CD8-positive, alpha-beta T cell (primary cell): ENCODE measurements at regions of chr2 and their contacts with region 1.

Region 1: DNA sequence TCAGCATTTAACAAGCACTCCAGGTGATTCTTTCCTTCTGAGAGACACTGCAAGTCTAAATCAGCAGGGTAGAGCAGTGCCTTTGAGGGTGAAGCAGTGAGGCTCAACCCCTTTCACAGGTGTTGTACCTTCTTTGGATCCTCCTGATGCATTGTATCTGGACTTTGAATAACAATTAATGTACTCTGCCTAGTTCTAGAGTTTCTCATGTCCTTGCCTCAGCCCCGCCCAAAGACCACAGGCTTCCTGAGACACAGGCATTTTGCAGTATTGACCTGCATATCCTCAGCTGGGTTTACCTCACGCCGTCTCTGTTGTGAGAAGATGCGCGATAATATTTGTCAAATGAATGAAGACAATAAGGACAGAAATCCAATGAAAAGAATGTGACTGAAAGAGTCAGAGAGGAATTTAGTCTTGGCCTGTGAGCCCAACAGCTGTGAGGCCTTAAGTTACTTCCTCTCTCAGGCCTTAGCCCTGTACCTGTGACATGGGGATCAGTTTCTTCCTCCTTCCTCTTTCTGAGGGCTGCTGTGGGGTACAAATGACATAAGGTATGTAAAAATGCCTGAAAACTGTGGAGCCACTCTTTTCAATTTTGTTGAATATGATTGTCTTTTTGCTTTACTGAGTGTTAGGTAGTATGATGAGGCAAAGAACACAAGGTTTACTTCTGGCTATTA is 43.7 kb downstream of the WIPF1 start:
- DNase-seq: peak in 6 of 9 experiments; percentile 15 to 63 (median 32)
- ATAC-seq: peak; percentile 47
- H3K4me3 ChIP-seq: peak overlapping the region in 1 of 2 experiments; percentile 4
- H3K4me3 Mint-ChIP-seq: peak overlapping the region; percentile 40
- H3K27ac ChIP-seq: peak overlapping the region; percentile 0 to 63
- H3K27ac Mint-ChIP-seq: peak overlapping the region; percentile 88
- H3K4me1 ChIP-seq: peaks cover 35% of the 10 kb centered on the region
- H3K4me1 Mint-ChIP-seq: peaks cover 47% of the 10 kb centered on the region
- H3K27me3 ChIP-seq: no peaks in the 10 kb centered on the region
- H3K27me3 Mint-ChIP-seq: no peaks in the 10 kb centered on the region
- CTCF ChIP-seq: no peak

Region 2: GRCh38 chr2:174487108-174487819 is 66.7 kb before region 1 on chr2:
- CTCF ChIA-PET with region 1: interaction called, 4 read pairs
- POLR2A ChIA-PET with region 1: interaction called, 6 read pairs
- intact Hi-C with region 1: loop called in 1 of 2 experiments (anchors 2 kb)
- DNase-seq: peak; percentile 77 to 98 (median 97)
- ATAC-seq: peak; percentile 74
- H3K4me3 ChIP-seq: peak overlapping the region; percentile 83 to 86
- H3K4me3 Mint-ChIP-seq: peak overlapping the region; percentile 97
- H3K27ac ChIP-seq: peak overlapping the region; percentile 69 to 85
- H3K27ac Mint-ChIP-seq: peak overlapping the region; percentile 88
- H3K4me1 ChIP-seq: peaks cover 59% of the 10 kb centered on the region
- H3K4me1 Mint-ChIP-seq: peaks cover 73% of the 10 kb centered on the region
- H3K27me3 ChIP-seq: no peaks in the 10 kb centered on the region
- H3K27me3 Mint-ChIP-seq: no peaks in the 10 kb centered on the region
- CTCF ChIP-seq: no peak

Region 3: DNA sequence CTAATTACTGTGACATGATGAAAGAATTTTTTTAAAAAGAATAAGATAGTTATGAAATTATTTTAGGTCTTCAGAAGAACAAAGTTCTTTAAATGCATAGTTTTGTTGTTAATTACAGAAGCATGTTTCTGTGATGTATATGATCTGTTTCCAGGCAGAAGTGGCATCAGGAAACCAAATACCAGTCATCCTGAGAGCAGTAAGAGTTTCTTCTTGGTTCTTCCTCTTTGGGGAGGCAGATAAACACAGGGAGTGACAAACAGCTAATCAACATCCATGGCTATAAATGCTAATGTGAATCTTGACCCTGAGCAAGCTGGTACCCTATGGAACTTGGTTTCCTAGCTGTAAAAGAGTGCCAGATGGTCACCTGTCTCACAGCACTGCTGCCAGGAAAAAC is 14.5 kb after region 1 on chr2:
- CTCF ChIA-PET with region 1: interaction called, 8 read pairs
- POLR2A ChIA-PET with region 1: interaction called, 3 read pairs
- intact Hi-C with region 1: loop called in 1 of 2 experiments (anchors 2 kb)
- DNase-seq: no peak
- ATAC-seq: no peak
- H3K4me3 ChIP-seq: no peak overlapping the region
- H3K4me3 Mint-ChIP-seq: no peak overlapping the region
- H3K27ac ChIP-seq: no peak overlapping the region
- H3K27ac Mint-ChIP-seq: peak overlapping the region; percentile 34
- H3K4me1 ChIP-seq: peaks cover 22% of the 10 kb centered on the region
- H3K4me1 Mint-ChIP-seq: peaks cover 45% of the 10 kb centered on the region
- H3K27me3 ChIP-seq: no peaks in the 10 kb centered on the region
- H3K27me3 Mint-ChIP-seq: no peaks in the 10 kb centered on the region
- CTCF ChIP-seq: no peak

Region 4: DNA sequence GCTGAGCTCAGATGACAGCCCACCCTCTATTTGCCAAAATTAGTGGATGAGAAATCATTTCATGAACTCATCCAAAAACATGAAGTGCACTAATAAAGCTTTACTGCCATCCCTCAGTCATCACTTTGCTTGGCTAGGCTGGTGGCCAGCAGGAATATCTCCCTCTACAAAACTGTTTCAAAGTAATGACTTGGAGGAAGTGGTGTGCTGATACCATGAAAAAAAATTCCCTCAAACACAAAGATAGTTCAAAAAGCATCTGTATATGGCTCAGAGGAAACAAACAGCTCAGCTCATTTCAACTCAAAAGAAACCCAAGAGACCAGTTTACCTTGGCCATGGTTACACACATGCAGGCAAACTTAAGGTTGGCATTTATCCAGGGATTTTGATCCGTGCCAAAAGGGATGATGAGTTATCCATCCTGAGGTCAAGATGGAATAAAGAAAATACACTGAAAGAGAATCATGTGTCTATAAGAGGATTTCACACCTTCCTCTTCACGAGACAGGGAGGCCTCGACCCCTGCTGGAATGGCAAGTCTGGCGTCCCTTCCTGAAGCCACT is 62.0 kb after region 1 on chr2:
- CTCF ChIA-PET with region 1: no interaction called
- POLR2A ChIA-PET with region 1: no interaction called
- intact Hi-C with region 1: no loop called
- DNase-seq: peak in 1 of 9 experiments; percentile 52
- ATAC-seq: peak; percentile 69
- H3K4me3 ChIP-seq: no peak overlapping the region
- H3K4me3 Mint-ChIP-seq: peak overlapping the region; percentile 12
- H3K27ac ChIP-seq: peak overlapping the region in 1 of 2 experiments; percentile 60
- H3K27ac Mint-ChIP-seq: peak overlapping the region; percentile 58
- H3K4me1 ChIP-seq: peaks cover 62% of the 10 kb centered on the region
- H3K4me1 Mint-ChIP-seq: peaks cover 83% of the 10 kb centered on the region
- H3K27me3 ChIP-seq: no peaks in the 10 kb centered on the region
- H3K27me3 Mint-ChIP-seq: no peaks in the 10 kb centered on the region
- CTCF ChIP-seq: no peak

Region 5: GRCh38 chr2:175004980-175005732 is 451.2 kb after region 1 on chr2 and contains the start of gene CHN1:
- CTCF ChIA-PET with region 1: no interaction called
- POLR2A ChIA-PET with region 1: no interaction called
- intact Hi-C with region 1: loop called in 1 of 2 experiments (anchors 10 kb)
- DNase-seq: peak; percentile 32 to 80 (median 69)
- ATAC-seq: peak; percentile 97
- H3K4me3 ChIP-seq: peak within 1 kb of the TSS; percentile 40 to 63
- H3K4me3 Mint-ChIP-seq: peak within 1 kb of the TSS; percentile 86
- H3K27ac ChIP-seq: no peak within 1 kb of the TSS
- H3K27ac Mint-ChIP-seq: no peak within 1 kb of the TSS
- H3K4me1 ChIP-seq: peaks cover 8% of the 10 kb centered on the region
- H3K4me1 Mint-ChIP-seq: peaks cover 14% of the 10 kb centered on the region
- H3K27me3 ChIP-seq: peaks cover 6 to 17% of the 10 kb centered on the region in 2 experiments
- H3K27me3 Mint-ChIP-seq: peaks cover 65% of the 10 kb centered on the region
- CTCF ChIP-seq: peak; percentile 17
- total RNA-seq, gene CHN1: 4.5 to 4.6 TPM